ENCODE measurements at regions of chr16 and their contacts with region 1.

Region 1: GRCh38 chr16:89667633-89668032 is 10.0 kb downstream of the SPATA33 start:
- DNase-seq: no peak
- H3K4me3 Mint-ChIP-seq: no peak overlapping the region
- H3K27ac Mint-ChIP-seq: no peak overlapping the region
- H3K4me1 Mint-ChIP-seq: peaks cover 23% of the 10 kb centered on the region
- H3K27me3 Mint-ChIP-seq: no peaks in the 10 kb centered on the region

Region 2: DNA sequence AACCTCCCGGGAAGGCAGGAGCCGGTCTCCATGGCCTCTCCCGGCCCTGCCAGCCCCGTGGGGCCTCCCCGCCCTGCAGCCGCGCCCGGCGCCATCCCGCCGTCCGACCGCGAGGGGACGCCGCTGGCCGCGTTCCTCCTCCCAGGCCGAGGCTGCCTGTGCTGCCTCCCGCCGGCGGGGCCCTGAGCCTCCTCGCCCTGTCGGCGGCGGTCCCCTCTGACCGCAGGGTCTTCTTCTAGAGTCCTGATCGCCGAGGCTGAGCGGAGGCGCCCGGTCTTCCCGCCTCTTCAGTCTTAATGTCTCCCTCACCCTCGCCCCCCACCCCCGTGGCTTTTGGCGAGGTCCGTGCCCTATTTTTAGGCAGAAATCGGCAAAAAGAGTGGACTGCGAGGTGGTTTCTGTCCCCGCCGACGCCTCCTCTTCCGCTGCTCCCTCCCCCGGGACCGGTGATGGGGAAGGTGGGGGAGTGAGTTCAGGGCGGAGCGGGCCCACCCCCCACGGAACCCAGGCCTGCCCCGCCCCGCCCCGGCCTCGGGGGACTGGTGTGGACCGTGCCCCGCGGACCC is 92.9 kb before region 1 on chr16:
- CTCF ChIA-PET with region 1: interaction called, 4 read pairs
- intact Hi-C with region 1: loop called (anchors 1 kb)
- DNase-seq: peak; percentile 75
- H3K4me3 Mint-ChIP-seq: peak overlapping the region; percentile 51
- H3K27ac Mint-ChIP-seq: no peak overlapping the region
- H3K4me1 Mint-ChIP-seq: peaks cover 14% of the 10 kb centered on the region
- H3K27me3 Mint-ChIP-seq: peaks cover 11% of the 10 kb centered on the region

Measured in activated naive CD4-positive, alpha-beta T cell treated with anti-CD3 and anti-CD28 coated beads for 36 hours (primary cell).